PC-3 (cell line): ENCODE measurements at regions of chrX and their contacts with region 1.

Region 1: DNA sequence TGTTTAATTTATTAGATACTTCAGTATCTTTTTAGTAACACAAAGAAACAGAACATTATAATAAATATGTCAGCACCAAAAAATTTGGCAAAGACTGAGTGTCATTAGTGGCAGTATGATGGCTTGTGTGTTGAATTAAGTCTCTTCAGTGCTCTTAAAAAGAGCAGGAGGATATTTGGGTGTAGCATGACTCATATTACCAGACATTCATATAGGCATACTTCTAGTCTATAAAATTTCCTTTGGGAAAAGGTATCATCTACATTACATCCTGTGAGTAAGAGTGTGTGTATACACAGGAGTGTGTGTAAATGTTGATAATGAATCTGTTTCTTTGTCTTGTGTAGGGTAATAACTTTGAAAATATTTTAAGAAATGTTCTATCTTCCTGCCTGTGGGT is 135.7 kb downstream of the CNKSR2 start:
- DNase-seq: peak; percentile 89
- ATAC-seq: peak; percentile 97
- H3K4me3 ChIP-seq: no peak overlapping the region
- H3K27ac ChIP-seq: peak overlapping the region; percentile 73
- H3K4me1 ChIP-seq: peaks cover 23% of the 10 kb centered on the region
- H3K27me3 ChIP-seq: no peaks in the 10 kb centered on the region
- CTCF ChIP-seq: no peak

Region 2: GRCh38 chrX:21528076-21528475 is 18.2 kb after region 1 on chrX:
- CTCF ChIA-PET with region 1: no interaction called
- POLR2A ChIA-PET with region 1: no interaction called
- intact Hi-C with region 1: loop called (anchors 1 kb)
- DNase-seq: peak; percentile 53
- ATAC-seq: peak; percentile 45
- H3K4me3 ChIP-seq: no peak overlapping the region
- H3K27ac ChIP-seq: peak overlapping the region; percentile 52
- H3K4me1 ChIP-seq: peaks cover 27% of the 10 kb centered on the region
- H3K27me3 ChIP-seq: no peaks in the 10 kb centered on the region
- CTCF ChIP-seq: no peak